Left lung (tissue), 14 donors: ENCODE measurements at regions of chr1 and their contacts with region 1.

Region 1: GRCh38 chr1:117754061-117754969 is 148.5 kb downstream of the TENT5C start:
- DNase-seq: peak in 3 of 4 donors; percentile 41 to 67 (median 41)
- ATAC-seq: peak; percentile 76
- H3K4me3 ChIP-seq: no peak overlapping the region
- H3K27ac ChIP-seq: no peak overlapping the region
- H3K4me1 ChIP-seq: peaks cover 14 to 15% of the 10 kb centered on the region in 2 donors
- H3K27me3 ChIP-seq: peaks cover 0 to 13% of the 10 kb centered on the region in 2 donors
- CTCF ChIP-seq: peak; percentile 41 to 74

Region 2: DNA sequence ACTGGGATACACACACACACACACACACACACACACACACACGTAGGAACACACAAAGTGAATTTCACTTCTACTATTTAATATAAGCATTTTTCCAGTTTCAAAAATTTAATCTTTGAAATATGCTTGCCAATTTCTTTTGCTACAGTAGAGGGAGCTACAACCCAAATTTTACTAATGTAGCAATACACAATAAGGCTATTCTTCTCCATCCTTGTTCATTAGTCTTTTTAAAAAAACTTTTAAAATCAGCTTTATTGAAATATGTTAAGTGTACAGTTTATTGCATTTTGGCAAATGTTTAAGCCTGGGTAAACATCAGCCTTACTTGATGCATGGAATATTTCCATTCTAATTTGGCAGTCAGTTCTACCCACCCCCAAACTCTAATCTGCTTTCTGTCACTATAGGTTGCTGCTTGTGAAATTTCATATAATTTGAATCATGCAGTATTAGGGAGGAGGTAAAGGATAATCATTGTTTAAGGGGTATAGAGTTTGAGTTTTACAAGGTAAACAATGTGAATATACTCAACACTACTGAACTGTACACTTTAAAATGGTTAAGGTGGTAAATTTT is 241.5 kb before region 1 on chr1:
- intact Hi-C with region 1: loop called in 1 of 2 experiments (anchors 5 kb)
- DNase-seq: peak in 2 of 4 donors; percentile 12 to 19
- ATAC-seq: peak; percentile 65
- H3K4me3 ChIP-seq: no peak overlapping the region
- H3K27ac ChIP-seq: no peak overlapping the region
- H3K4me1 ChIP-seq: no peaks in the 10 kb centered on the region
- H3K27me3 ChIP-seq: no peaks in the 10 kb centered on the region
- CTCF ChIP-seq: peak; percentile 25 to 40

Region 3: DNA sequence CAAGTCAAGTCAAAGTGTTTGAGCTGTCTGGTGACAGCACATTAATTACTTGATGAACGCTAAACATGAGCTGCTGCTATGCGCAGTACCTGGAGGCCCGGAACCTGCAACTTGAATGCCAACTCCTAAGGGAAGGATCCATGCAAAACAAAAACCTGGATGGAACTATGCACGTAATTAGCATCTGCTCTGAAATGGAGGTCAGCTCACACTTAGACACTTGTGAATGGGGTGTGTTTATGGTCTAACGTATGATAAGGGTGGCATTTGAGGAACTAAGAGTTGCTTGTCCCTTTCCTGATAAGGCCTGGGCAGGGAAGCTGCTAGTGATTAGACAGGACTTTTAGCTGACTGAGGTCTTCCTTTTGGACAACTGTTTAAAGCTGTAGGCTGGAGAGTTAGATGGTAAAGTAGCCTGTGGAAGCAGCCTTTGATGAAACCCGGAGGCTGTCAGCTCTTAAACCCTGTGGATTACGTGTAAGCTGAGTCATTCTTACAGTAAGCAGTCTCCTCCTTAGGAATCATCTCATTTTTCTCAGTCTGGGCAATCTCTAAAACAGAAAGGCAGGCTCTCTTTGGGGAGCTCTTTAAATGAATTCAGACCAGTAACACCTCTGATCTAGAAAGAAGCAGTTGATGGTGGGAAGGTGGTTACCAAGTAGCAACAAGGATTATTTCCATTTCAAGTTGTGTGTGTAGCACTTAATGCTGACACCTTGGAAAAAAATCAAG is 141.6 kb before region 1 on chr1:
- intact Hi-C with region 1: no loop called
- DNase-seq: no peak
- ATAC-seq: peak; percentile 66
- H3K4me3 ChIP-seq: no peak overlapping the region
- H3K27ac ChIP-seq: peak overlapping the region; percentile 49 to 53
- H3K4me1 ChIP-seq: peaks cover 9 to 58% of the 10 kb centered on the region in 2 donors
- H3K27me3 ChIP-seq: no peaks in the 10 kb centered on the region
- CTCF ChIP-seq: no peak

Region 4: GRCh38 chr1:117886101-117886795 is 131.9 kb after region 1 on chr1:
- intact Hi-C with region 1: no loop called
- DNase-seq: no peak
- ATAC-seq: no peak
- H3K4me3 ChIP-seq: no peak overlapping the region
- H3K27ac ChIP-seq: no peak overlapping the region
- H3K4me1 ChIP-seq: no peaks in the 10 kb centered on the region
- H3K27me3 ChIP-seq: no peaks in the 10 kb centered on the region
- CTCF ChIP-seq: no peak